Dendritic cell treated with granulocyte-macrophage colony-stimulating factor and Interleukin-4, amounts not matched to agents 40 ng/mL and 50 ng/mL, for 4 days (primary cell): ENCODE measurements at regions of chr19 and their contacts with region 1.

Region 1: GRCh38 chr19:35740423-35741202 is 1.6 kb downstream of the IGFLR1 start:
- H3K4me3 Mint-ChIP-seq: peak overlapping the region; percentile 86
- H3K27ac Mint-ChIP-seq: peak overlapping the region; percentile 99
- H3K4me1 Mint-ChIP-seq: peaks cover 61% of the 10 kb centered on the region
- H3K27me3 Mint-ChIP-seq: no peaks in the 10 kb centered on the region

Region 2: DNA sequence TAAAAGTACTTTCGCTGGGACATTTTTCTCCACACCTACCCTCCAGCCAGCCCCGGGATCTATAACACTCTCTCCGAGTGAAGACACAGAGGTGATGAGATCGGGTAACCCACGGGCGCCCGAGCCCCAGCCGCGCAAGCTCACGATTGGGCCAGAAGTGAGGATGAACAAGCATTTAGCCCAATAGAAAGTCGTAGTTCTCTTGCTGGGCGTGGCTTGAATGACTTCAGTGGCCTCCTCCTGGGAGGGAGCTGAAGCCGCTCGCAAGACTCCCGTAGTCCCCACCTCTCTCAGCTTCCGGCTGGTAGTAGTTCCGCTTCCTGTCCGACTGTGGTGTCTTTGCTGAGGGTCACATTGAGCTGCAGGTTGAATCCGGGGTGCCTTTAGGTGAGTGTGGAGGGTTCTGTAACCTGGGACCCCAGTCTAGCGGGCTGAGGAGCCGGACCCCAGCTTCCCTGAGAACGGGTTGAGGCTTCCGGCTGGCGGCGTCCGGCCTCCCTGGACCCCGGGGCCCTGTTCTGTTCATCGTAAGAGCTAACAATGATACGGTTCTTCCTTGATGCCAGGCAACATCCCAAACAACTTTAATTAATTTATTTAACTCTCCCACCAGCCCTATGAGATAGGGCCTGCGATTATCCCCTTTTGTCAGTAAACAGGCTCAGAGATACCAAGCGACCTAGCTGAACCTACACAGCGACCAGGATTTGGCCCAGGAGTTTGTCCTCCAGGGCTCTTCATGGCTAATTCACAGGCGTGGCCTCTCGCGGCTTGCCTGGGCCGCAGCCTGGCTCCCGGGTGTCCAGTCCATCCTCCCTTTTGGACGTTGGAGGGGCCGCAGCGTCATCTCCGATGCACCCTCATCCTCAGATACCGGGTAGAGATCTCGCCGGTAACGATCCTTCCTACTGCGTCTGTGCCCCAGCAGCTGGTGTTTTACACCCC is 92.3 kb before region 1 on chr19 and contains the start of gene COX6B1:
- intact Hi-C with region 1: loop called (anchors 10 kb)
- H3K4me3 Mint-ChIP-seq: peak within 1 kb of the TSS; percentile 89
- H3K27ac Mint-ChIP-seq: peak within 1 kb of the TSS; percentile 97
- H3K4me1 Mint-ChIP-seq: peaks cover 55% of the 10 kb centered on the region
- H3K27me3 Mint-ChIP-seq: no peaks in the 10 kb centered on the region

Region 3: GRCh38 chr19:35693830-35694599 is 46.6 kb before region 1 on chr19:
- intact Hi-C with region 1: no loop called
- H3K4me3 Mint-ChIP-seq: no peak overlapping the region
- H3K27ac Mint-ChIP-seq: no peak overlapping the region
- H3K4me1 Mint-ChIP-seq: peaks cover 4% of the 10 kb centered on the region
- H3K27me3 Mint-ChIP-seq: peaks cover 4% of the 10 kb centered on the region

Region 4: DNA sequence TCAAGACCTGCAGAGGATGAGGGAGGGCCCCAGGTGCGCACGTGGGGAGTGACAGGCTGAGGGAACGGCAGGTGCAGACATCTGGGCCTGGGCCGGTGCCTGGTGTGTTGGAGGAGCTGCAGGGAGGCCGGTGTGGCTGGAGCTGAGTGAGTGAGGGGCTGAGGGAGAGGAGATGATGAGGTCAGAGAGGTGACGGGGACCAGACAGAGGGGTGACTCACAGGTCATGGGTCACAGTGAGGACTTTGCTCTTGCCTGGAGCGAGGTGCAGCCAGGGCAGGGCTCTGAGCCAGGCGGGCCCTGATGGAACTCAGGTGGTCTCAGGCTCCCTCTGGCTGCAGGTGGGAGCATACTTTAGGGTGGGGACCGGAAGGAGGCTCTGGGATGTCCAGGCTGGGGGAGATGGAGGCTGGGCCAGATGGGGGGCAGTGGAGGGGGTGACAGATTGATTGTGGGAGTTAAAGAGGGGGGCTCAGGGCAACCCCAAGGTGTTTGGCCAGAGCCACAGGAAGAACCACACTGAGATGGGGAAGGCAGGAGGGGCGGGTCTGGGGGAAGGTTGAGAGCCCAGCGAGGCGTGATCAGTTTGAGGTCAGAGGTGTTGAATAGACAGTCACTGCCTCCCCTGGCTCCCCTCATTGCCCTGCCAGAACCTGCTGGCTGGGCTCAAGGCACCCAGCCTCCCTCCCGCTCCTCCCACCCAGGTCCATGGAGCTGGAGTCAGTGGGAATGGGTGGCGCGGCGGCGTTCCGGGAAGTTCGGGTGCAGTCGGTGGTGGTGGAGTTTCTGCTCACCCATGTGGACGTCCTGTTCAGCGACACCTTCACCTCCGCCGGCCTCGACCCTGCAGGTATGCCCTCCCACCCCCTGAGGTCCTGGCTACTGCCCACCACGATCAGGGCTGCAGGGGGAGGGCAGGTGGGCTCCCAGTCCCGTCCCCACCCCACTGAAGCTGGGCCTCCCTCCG is 43.1 kb after region 1 on chr19:
- intact Hi-C with region 1: no loop called
- H3K4me3 Mint-ChIP-seq: no peak overlapping the region
- H3K27ac Mint-ChIP-seq: no peak overlapping the region
- H3K4me1 Mint-ChIP-seq: no peaks in the 10 kb centered on the region
- H3K27me3 Mint-ChIP-seq: no peaks in the 10 kb centered on the region

Region 5: DNA sequence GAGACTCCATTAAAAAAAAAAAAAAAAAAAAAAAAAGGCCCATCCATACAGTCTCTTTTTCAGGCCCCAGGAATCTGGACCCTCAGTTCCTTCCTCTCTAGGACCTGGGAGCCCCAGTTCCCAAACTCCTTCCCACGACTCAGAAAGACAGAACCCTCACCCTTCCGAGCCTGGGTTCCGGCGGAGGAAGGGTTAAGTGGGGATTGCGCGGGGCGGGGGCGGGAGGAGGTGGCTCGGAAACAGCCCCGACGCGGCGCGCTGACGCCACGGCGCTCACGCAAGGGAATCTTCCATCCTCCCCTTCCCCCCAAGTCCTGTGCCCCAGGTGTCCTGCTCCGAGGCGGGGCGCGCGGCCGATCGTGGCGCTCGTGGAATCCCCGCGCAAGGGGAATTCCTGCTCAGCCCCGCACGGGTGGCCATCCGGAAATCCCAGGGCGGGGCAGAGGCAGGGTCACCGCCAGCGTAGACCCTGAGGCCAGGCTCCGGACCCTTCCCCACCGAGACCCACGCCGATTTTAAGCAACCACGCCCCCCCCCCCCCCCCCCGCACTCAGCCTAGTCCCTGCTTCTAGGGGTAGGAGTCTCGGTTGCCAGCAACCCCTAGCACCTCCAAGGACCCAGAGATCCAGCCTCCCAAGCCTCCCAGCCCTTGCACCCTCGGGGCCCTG is 159.1 kb after region 1 on chr19:
- intact Hi-C with region 1: loop called (anchors 10 kb)
- H3K4me3 Mint-ChIP-seq: peak overlapping the region; percentile 98
- H3K27ac Mint-ChIP-seq: peak overlapping the region; percentile 96
- H3K4me1 Mint-ChIP-seq: peaks cover 67% of the 10 kb centered on the region
- H3K27me3 Mint-ChIP-seq: no peaks in the 10 kb centered on the region